H1 (cell line): ENCODE measurements at regions of chr6 and their contacts with region 1.

Region 1: DNA sequence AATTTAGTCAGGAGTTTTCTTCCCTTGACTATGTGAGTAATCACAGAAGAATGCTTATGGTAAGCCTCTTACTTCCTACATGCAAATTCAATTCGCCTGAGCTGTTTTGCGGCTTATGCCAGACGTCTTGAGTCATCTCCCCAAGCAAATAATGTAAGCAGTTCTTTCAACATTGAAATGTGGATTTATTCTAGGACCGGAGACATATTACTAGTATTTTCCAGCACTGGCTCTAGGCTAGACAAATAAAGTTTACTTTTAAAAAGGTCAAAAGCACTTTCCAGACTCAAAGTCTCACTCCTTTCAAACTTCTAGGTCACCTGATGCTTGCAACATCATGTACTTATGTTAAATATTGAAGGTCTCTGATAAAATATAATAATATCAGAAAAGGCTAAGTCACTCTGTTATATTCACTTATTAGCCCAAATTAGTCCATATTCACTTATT is 38.1 kb upstream of the NOX3 start:
- DNase-seq: peak in 1 of 2 experiments; percentile 47
- H3K4me3 ChIP-seq: no peak overlapping the region
- H3K27ac ChIP-seq: no peak overlapping the region
- H3K4me1 ChIP-seq: no peaks in the 10 kb centered on the region; a peak in 1 of 7 replicates
- H3K27me3 ChIP-seq: no peaks in the 10 kb centered on the region
- CTCF ChIP-seq: no peak
- EP300 ChIP-seq: no peak
- POLR2A ChIP-seq: no peak
- RAD21 ChIP-seq: no peak

Region 2: DNA sequence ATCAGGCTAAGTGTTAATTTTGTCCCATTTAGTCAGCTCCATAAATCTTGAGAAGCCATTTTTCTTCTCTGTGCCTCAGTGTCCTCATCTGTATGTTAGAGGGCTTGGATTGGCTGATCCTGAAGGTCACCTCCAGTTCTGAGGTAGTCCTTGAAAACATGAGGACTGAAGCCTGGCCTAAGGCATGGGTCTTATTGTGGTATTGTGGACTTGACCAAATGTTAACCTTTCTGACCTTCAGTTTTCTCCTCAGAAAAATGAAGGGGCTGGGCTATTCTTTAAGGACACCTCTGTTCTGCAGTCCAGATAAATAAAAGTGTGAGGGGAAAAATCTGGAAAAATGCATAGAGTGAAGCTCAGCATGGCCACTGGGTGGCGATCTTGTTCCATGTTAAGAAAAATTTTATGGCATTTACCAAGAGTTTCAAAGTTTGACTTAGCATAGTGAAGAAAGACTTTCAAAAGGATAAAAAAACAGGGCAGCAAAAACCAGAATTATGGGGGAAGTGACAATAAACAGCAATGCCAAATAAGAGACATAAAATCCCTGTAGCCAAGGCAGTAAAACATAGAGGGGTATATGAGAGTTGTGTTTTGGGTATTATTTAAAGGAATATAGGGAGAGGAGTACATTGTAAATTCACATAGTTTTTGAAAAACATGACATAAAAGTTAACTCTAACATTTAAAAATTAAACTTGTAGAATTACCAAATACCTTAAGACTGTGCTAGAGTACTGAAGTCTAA is 166.2 kb before region 1 on chr6:
- CTCF ChIA-PET with region 1: interaction called, 21 read pairs
- POLR2A ChIA-PET with region 1: no interaction called
- DNase-seq: peak in 1 of 2 experiments; percentile 63
- H3K4me3 ChIP-seq: no peak overlapping the region
- H3K27ac ChIP-seq: no peak overlapping the region
- H3K4me1 ChIP-seq: no peaks in the 10 kb centered on the region
- H3K27me3 ChIP-seq: no peaks in the 10 kb centered on the region
- CTCF ChIP-seq: peak in 2 of 3 experiments; percentile 65 to 70; a peak in 3 of 4 replicates
- EP300 ChIP-seq: 0 out of 3 replicates have a peak, but pooled peaks of 1 of the 2 experiments have one; percentile 7
- POLR2A ChIP-seq: no peak
- RAD21 ChIP-seq: peak; percentile 90 to 91

Region 3: GRCh38 chr6:155340464-155341129 is 153.1 kb before region 1 on chr6:
- CTCF ChIA-PET with region 1: interaction called, 30 read pairs
- POLR2A ChIA-PET with region 1: no interaction called
- DNase-seq: no peak
- H3K4me3 ChIP-seq: no peak overlapping the region
- H3K27ac ChIP-seq: no peak overlapping the region
- H3K4me1 ChIP-seq: no peaks in the 10 kb centered on the region
- H3K27me3 ChIP-seq: no peaks in the 10 kb centered on the region
- CTCF ChIP-seq: peak in 2 of 3 experiments; percentile 71 to 72; a peak in 3 of 4 replicates
- EP300 ChIP-seq: no peak
- POLR2A ChIP-seq: no peak
- RAD21 ChIP-seq: peak; percentile 89 to 92

Region 4: DNA sequence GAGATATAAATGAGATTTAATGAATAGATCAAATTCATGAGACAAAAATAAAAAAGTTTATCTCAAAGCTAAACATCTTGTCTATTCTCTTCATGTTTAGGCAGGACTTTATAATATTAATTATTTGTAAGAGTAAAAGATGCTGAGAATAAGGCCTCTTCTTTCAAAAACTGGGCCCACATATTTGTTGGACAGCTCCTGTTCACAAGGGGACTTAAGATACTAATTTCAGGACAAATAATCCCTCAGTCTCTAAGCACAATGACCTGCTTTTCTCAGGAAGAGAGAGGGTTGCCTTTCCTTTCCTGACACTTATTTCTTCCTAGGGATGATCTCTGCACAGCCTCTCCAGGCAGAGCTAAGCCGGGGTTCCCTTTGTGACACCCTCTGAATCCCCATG is 81.4 kb before region 1 on chr6:
- CTCF ChIA-PET with region 1: interaction called, 64 read pairs
- POLR2A ChIA-PET with region 1: no interaction called
- DNase-seq: no peak
- H3K4me3 ChIP-seq: no peak overlapping the region
- H3K27ac ChIP-seq: no peak overlapping the region
- H3K4me1 ChIP-seq: peaks cover 0 to 2% (median under 1%) of the 10 kb centered on the region in 4 experiments; a peak in 2 of 7 replicates
- H3K27me3 ChIP-seq: no peaks in the 10 kb centered on the region
- CTCF ChIP-seq: no peak
- EP300 ChIP-seq: no peak
- POLR2A ChIP-seq: no peak
- RAD21 ChIP-seq: no peak

Region 5: DNA sequence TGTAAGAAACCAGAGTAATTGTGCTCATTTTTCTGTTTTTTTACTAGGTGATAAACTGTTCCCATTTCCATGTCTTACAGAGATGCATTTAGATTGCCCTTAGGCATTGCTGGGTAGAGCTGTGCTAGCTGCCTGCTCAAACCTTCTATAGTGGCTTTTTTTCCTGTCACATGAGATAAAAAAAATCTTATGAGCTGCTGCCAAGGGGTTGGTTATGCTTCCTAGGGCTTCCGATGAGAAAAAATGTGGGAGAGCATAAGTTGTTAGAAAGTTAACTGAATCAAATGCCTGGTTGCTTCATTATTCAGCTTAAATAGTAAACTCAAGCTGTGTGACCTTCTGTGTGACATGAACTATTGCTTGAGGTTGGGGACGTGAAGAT is 11.9 kb after region 1 on chr6:
- CTCF ChIA-PET with region 1: interaction called, 13 read pairs
- POLR2A ChIA-PET with region 1: no interaction called
- DNase-seq: no peak
- H3K4me3 ChIP-seq: no peak overlapping the region
- H3K27ac ChIP-seq: no peak overlapping the region
- H3K4me1 ChIP-seq: no peaks in the 10 kb centered on the region
- H3K27me3 ChIP-seq: no peaks in the 10 kb centered on the region
- CTCF ChIP-seq: no peak
- EP300 ChIP-seq: no peak
- POLR2A ChIP-seq: no peak
- RAD21 ChIP-seq: no peak

Region 6: GRCh38 chr6:155543166-155543847 is 49.6 kb after region 1 on chr6:
- CTCF ChIA-PET with region 1: no interaction called
- POLR2A ChIA-PET with region 1: no interaction called
- DNase-seq: no peak
- H3K4me3 ChIP-seq: no peak overlapping the region
- H3K27ac ChIP-seq: no peak overlapping the region
- H3K4me1 ChIP-seq: peaks cover 0 to 3% (median 0%) of the 10 kb centered on the region in 4 experiments; a peak in 1 of 7 replicates
- H3K27me3 ChIP-seq: no peaks in the 10 kb centered on the region
- CTCF ChIP-seq: no peak
- EP300 ChIP-seq: no peak
- POLR2A ChIP-seq: no peak
- RAD21 ChIP-seq: no peak

Region 7: GRCh38 chr6:155561257-155561965 is 67.7 kb after region 1 on chr6:
- CTCF ChIA-PET with region 1: no interaction called
- POLR2A ChIA-PET with region 1: no interaction called
- DNase-seq: no peak
- H3K4me3 ChIP-seq: no peak overlapping the region
- H3K27ac ChIP-seq: no peak overlapping the region
- H3K4me1 ChIP-seq: no peaks in the 10 kb centered on the region
- H3K27me3 ChIP-seq: no peaks in the 10 kb centered on the region
- CTCF ChIP-seq: no peak
- EP300 ChIP-seq: no peak
- POLR2A ChIP-seq: no peak
- RAD21 ChIP-seq: no peak

Region 8: DNA sequence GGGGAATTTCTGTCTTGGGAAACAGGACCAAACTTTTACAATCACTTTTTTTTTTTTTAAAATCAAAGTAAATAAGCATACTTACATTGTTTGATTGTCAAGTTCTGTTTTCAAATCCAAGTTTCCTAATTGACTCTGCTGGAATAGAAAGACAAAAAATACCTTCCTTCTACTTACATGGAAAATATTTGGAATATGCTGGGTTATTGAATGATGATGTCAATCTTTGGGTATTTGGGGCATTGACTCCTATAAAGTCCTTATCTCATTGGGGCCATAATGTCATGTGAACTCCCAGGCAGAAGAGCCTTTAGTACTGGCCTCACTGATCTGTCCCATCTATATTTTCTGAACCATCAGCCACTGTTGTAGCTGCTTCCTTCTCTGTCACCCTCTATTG is 84.5 kb after region 1 on chr6:
- CTCF ChIA-PET with region 1: no interaction called
- POLR2A ChIA-PET with region 1: no interaction called
- DNase-seq: no peak
- H3K4me3 ChIP-seq: no peak overlapping the region
- H3K27ac ChIP-seq: no peak overlapping the region
- H3K4me1 ChIP-seq: no peaks in the 10 kb centered on the region
- H3K27me3 ChIP-seq: no peaks in the 10 kb centered on the region
- CTCF ChIP-seq: no peak
- EP300 ChIP-seq: no peak
- POLR2A ChIP-seq: no peak
- RAD21 ChIP-seq: no peak

Region 9: GRCh38 chr6:155915651-155916050 is 421.9 kb after region 1 on chr6:
- CTCF ChIA-PET with region 1: no interaction called
- POLR2A ChIA-PET with region 1: no interaction called
- DNase-seq: no peak
- H3K4me3 ChIP-seq: no peak overlapping the region
- H3K27ac ChIP-seq: no peak overlapping the region
- H3K4me1 ChIP-seq: no peaks in the 10 kb centered on the region
- H3K27me3 ChIP-seq: no peaks in the 10 kb centered on the region
- CTCF ChIP-seq: no peak
- EP300 ChIP-seq: no peak
- POLR2A ChIP-seq: no peak
- RAD21 ChIP-seq: no peak